ENCODE measurements at regions of chr18 and their contacts with region 1.

Region 1: GRCh38 chr18:51110073-51110803 is 80.2 kb downstream of the SMAD4 start:
- DNase-seq: peak; percentile 25
- H3K4me3 ChIP-seq: peak overlapping the region in 2 of 3 experiments; percentile 40 to 46
- H3K27ac ChIP-seq: no peak overlapping the region
- H3K4me1 ChIP-seq: peaks cover 8% of the 10 kb centered on the region
- H3K27me3 ChIP-seq: no peaks in the 10 kb centered on the region
- CTCF ChIP-seq: peak; percentile 70 to 97

Region 2: GRCh38 chr18:50866765-50867164 is 243.5 kb before region 1 on chr18:
- CTCF ChIA-PET with region 1: no interaction called
- dilution Hi-C with region 1: no loop called
- in situ Hi-C with region 1: no loop called
- intact Hi-C with region 1: no loop called
- DNase-seq: no peak
- H3K4me3 ChIP-seq: no peak overlapping the region
- H3K27ac ChIP-seq: no peak overlapping the region
- H3K4me1 ChIP-seq: peaks cover 32% of the 10 kb centered on the region
- H3K27me3 ChIP-seq: no peaks in the 10 kb centered on the region
- CTCF ChIP-seq: peak; percentile 13 to 29

Region 3: DNA sequence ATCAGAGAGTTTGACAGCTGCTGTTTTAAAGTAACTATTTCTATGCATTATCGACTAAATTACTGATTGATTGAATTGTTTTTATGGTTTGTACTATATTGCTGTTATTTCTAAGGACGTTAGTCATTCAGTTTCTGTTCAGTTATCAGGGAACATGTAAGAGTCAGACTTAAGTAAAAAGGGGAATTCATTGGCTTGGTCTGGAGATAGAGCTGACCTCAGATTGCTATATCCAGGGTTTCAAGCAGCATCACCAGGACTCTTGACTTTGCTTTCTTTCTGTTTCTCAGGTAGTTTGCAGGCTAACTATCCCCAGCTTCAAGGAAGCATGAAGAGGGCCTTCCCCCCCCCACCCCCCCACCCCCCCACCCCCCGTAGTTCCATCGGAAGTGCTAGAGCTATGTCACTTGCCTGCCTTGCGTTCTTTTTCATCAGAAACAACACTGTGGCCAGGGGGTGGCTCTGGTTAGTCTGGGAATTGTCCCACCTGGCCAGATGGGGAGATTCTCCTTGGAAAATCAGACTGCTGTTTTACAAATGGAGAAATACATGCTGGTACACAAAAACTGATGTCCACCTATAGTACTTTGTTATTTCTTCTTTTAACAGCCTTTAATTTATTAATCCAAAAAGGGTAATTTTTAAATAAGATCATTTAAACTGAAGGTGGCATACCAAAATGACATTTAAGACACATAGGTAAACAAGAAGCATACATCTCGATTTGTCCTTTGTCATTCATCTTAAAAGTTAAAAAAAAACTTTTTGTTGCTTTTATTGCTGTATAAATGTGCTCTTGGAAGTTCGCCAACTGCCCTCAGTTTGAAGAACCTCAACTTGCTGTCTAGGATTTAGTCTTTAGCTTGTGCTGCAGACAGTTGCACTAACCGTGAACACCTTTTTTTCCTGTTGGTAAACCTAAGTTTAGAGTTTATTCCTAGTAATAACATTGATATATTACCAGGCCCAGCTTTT is 70.8 kb before region 1 on chr18:
- CTCF ChIA-PET with region 1: no interaction called
- dilution Hi-C with region 1: loop called (anchors 5 kb)
- in situ Hi-C with region 1: no loop called
- intact Hi-C with region 1: no loop called
- DNase-seq: peak; percentile 20
- H3K4me3 ChIP-seq: no peak overlapping the region
- H3K27ac ChIP-seq: peak overlapping the region; percentile 5
- H3K4me1 ChIP-seq: no peaks in the 10 kb centered on the region
- H3K27me3 ChIP-seq: no peaks in the 10 kb centered on the region
- CTCF ChIP-seq: no peak

Region 4: GRCh38 chr18:51241226-51241625 is 131.0 kb after region 1 on chr18:
- CTCF ChIA-PET with region 1: no interaction called
- dilution Hi-C with region 1: no loop called
- in situ Hi-C with region 1: no loop called
- intact Hi-C with region 1: no loop called
- DNase-seq: no peak
- H3K4me3 ChIP-seq: no peak overlapping the region
- H3K27ac ChIP-seq: no peak overlapping the region
- H3K4me1 ChIP-seq: peaks cover 5% of the 10 kb centered on the region
- H3K27me3 ChIP-seq: no peaks in the 10 kb centered on the region
- CTCF ChIP-seq: no peak

Region 5: GRCh38 chr18:51278045-51278649 is 167.9 kb after region 1 on chr18:
- CTCF ChIA-PET with region 1: no interaction called
- dilution Hi-C with region 1: no loop called
- in situ Hi-C with region 1: no loop called
- intact Hi-C with region 1: loop called (anchors 2 kb)
- DNase-seq: peak; percentile 57
- H3K4me3 ChIP-seq: no peak overlapping the region
- H3K27ac ChIP-seq: no peak overlapping the region
- H3K4me1 ChIP-seq: no peaks in the 10 kb centered on the region
- H3K27me3 ChIP-seq: no peaks in the 10 kb centered on the region
- CTCF ChIP-seq: peak; percentile 96 to 98

Region 6: GRCh38 chr18:51537487-51537886 is 427.2 kb after region 1 on chr18:
- CTCF ChIA-PET with region 1: no interaction called
- dilution Hi-C with region 1: no loop called
- in situ Hi-C with region 1: loop called (anchors 5 to 10 kb)
- intact Hi-C with region 1: loop called (anchors 1 kb)
- DNase-seq: peak; percentile 66
- H3K4me3 ChIP-seq: no peak overlapping the region
- H3K27ac ChIP-seq: no peak overlapping the region
- H3K4me1 ChIP-seq: no peaks in the 10 kb centered on the region
- H3K27me3 ChIP-seq: no peaks in the 10 kb centered on the region
- CTCF ChIP-seq: peak; percentile 46 to 61

Region 7: DNA sequence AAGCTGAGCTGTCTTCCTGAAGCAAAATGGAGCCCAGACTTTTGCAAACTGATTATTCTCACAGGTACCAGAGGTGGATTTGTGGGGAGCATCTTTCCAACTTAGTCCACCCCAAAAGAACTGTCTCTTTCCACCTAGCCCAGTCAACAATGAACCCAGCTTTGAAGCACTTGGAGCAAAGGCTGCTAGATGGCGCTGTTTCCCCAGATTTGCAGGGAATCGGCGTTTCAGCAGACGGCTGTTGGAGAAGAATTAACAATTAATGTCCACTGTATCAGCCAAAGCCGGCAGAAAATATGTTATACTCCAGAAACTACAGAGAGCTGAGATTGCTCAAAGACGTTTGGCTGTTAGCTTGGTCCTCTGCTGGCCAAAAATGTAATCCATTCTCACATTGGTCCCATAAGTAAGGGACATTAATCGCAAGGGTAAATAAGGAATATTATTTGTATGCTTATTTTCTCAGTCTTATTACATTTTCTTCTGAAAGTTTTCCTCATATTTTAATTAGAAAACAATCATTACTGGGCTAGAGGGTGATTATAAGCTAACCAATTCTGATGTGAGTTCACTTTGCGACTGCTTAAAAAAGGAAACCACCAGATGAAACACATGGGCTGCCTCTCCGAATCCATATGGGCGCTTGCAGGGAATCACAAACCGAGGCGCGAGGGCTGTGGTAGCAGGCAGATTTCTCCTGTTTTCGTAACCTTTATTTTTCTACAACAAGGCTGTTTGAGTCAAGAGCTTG is 511.1 kb after region 1 on chr18:
- CTCF ChIA-PET with region 1: no interaction called
- dilution Hi-C with region 1: no loop called
- in situ Hi-C with region 1: no loop called
- intact Hi-C with region 1: loop called (anchors 5 kb)
- DNase-seq: peak; percentile 48
- H3K4me3 ChIP-seq: no peak overlapping the region
- H3K27ac ChIP-seq: no peak overlapping the region
- H3K4me1 ChIP-seq: peaks cover 21% of the 10 kb centered on the region
- H3K27me3 ChIP-seq: no peaks in the 10 kb centered on the region
- CTCF ChIP-seq: peak; percentile 95 to 97